ENCODE measurements at regions of chr5 and their contacts with region 1.

Region 1: DNA sequence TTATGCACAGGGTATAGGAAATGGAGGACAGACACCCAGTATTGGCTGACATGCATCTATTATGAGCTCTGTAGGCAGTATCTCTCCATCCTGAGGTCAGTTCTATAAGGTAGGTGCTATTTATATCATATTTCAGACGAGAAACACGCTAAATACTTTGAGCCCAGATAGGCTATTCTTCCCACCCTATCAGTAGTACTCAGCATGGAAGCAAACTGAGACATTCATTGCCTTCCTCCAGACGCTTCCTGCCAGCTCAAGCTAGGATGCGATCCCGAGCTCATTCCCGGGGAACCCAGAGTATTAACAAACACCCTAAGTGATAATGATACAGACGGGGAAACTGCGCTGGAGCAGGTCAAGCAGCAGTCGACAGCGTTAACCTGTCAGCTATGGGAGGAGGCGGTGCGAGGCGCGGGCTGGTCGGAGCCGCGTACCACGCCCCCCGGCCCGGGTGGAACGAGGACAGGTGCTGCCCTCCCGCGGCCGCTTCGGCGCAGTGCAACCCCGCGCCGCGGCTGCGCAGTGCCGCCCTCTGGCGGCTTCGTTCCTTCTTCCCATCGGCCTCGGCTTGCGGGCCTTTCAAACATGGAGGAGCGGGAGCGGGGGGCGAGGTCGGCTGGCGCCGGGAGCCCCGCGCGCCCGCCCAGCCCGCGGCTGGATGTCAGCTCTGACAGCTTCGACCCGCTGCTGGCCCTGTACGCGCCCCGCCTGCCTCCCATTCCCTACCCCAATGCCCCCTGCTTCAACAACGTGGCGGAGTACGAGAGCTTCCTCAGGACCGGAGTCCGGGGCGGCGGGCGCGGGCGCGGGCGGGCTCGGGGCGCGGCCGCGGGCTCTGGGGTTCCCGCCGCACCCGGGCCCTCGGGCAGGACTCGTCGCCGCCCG is at the start of gene LSM11:
- DNase-seq: peak; percentile 88
- H3K4me3 Mint-ChIP-seq: peak within 1 kb of the TSS; percentile 86
- H3K27ac Mint-ChIP-seq: peak within 1 kb of the TSS; percentile 86
- H3K4me1 Mint-ChIP-seq: peaks cover 33% of the 10 kb centered on the region
- H3K27me3 Mint-ChIP-seq: no peaks in the 10 kb centered on the region
- total RNA-seq, gene LSM11: 4.8 to 5.3 TPM

Region 2: DNA sequence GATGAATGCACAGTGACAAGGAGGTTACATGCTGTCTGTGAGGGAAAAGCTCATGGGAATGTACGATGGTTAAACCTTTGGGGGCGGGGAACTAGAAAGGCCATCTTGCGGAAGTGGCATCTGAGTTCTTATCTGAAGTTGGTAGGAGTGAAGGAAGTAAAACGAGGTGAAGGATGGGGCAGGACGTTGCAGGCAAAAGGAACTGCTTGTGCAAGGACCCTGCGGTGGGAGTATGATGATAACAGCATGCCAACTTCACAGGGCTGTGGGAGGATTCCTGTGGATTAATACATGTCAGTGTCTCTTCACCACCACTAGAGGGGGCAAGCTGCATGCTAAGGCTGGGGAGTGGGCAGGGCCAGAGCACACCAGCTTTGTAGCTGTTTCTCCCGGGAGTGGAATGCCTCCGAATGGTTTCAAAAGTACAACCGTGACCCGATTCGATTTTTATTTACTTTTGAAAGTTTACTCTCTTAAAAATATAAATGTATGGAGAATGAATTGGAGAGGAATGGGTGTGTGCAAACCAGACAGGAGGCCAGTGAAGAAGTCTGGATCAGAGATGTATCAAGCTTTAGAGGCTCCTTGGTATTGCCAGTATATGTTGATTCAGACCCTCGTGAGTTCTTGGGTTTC is 415.0 kb before region 1 on chr5:
- CTCF ChIA-PET with region 1: interaction called, 26 read pairs
- POLR2A ChIA-PET with region 1: no interaction called
- DNase-seq: peak; percentile 68
- H3K4me3 Mint-ChIP-seq: no peak overlapping the region
- H3K27ac Mint-ChIP-seq: peak overlapping the region; percentile 82
- H3K4me1 Mint-ChIP-seq: peaks cover 34% of the 10 kb centered on the region
- H3K27me3 Mint-ChIP-seq: no peaks in the 10 kb centered on the region

Region 3: DNA sequence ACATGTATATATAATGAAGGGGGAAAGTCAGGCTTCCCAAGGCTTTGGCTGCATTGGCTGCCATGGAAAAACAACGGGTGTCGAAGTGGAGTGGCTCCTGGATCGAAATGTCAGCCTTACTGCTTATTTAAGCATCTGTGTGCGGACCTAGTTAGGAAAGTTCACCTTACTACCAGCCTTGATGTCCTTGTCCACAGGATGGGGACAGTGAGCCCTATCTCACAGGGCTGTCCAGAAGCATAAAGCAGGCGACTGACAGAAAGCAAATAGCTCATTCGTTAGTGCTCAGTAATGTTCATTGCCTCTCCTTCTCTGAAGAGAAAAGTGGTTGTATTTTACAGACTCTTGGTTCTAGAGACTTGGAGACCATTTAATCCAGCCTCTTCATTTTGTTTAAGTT is 364.9 kb before region 1 on chr5:
- CTCF ChIA-PET with region 1: no interaction called
- POLR2A ChIA-PET with region 1: no interaction called
- DNase-seq: no peak
- H3K4me3 Mint-ChIP-seq: no peak overlapping the region
- H3K27ac Mint-ChIP-seq: no peak overlapping the region
- H3K4me1 Mint-ChIP-seq: peaks cover 6% of the 10 kb centered on the region
- H3K27me3 Mint-ChIP-seq: no peaks in the 10 kb centered on the region

Region 4: GRCh38 chr5:157390551-157391297 is 352.7 kb before region 1 on chr5:
- CTCF ChIA-PET with region 1: interaction called, 11 read pairs
- POLR2A ChIA-PET with region 1: no interaction called
- DNase-seq: peak; percentile 35
- H3K4me3 Mint-ChIP-seq: no peak overlapping the region
- H3K27ac Mint-ChIP-seq: peak overlapping the region; percentile 82
- H3K4me1 Mint-ChIP-seq: peaks cover 18% of the 10 kb centered on the region
- H3K27me3 Mint-ChIP-seq: no peaks in the 10 kb centered on the region

Region 5: GRCh38 chr5:157464519-157465171 is 278.8 kb before region 1 on chr5:
- CTCF ChIA-PET with region 1: interaction called, 10 read pairs
- POLR2A ChIA-PET with region 1: no interaction called
- DNase-seq: peak; percentile 51
- H3K4me3 Mint-ChIP-seq: no peak overlapping the region
- H3K27ac Mint-ChIP-seq: no peak overlapping the region
- H3K4me1 Mint-ChIP-seq: peaks cover 33% of the 10 kb centered on the region
- H3K27me3 Mint-ChIP-seq: peaks cover 19% of the 10 kb centered on the region

Region 6: GRCh38 chr5:157721159-157721558 is 22.2 kb before region 1 on chr5:
- CTCF ChIA-PET with region 1: interaction called, 18 read pairs
- POLR2A ChIA-PET with region 1: no interaction called
- DNase-seq: no peak
- H3K4me3 Mint-ChIP-seq: no peak overlapping the region
- H3K27ac Mint-ChIP-seq: no peak overlapping the region
- H3K4me1 Mint-ChIP-seq: peaks cover 30% of the 10 kb centered on the region
- H3K27me3 Mint-ChIP-seq: no peaks in the 10 kb centered on the region

Region 7: DNA sequence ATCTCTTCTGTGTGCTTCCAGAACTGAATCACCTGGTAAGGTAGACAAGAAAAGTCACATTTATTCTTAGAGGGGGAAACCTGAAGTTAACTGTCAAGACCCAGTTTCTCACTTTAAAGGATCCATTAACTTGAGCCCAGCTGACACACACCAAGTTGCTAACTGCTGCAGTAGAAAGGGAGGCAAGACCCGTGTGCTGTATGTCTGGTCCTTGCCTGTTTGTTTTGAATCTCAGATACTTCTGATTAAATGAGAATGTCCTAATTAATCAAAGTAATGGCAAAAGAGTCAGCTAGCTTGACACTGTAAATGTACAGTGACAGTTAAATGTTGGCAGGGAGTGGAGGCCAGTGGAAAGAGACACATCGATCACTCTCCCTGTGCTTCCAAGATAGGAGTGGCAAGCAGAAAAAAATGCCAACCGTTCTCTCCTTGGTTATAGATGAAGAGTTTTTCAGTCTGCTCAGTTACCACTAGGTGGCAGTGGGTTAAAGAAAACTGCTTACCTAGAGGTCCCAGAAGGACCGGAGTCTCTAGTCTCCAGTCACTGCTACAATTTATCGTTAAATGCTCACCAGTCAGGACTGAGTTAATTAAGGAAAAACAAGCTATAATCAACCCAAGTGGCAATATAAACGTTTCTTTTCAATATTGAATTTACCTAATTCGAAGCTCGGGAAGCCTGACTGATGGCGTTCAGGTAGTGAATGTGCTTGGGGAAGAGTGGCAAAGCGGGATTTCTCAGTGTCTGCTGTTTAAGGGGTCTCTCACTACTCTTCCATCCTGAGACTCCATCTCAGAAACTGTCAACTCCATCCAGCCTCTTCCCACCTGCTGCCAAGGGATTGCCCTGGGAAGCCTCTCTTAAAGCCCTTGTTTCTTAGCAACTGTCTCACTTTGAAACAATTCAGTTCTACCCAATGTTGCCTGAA is 18.5 kb after region 1 on chr5:
- CTCF ChIA-PET with region 1: interaction called, 16 read pairs
- POLR2A ChIA-PET with region 1: no interaction called
- DNase-seq: peak; percentile 51
- H3K4me3 Mint-ChIP-seq: no peak overlapping the region
- H3K27ac Mint-ChIP-seq: no peak overlapping the region
- H3K4me1 Mint-ChIP-seq: peaks cover 8% of the 10 kb centered on the region
- H3K27me3 Mint-ChIP-seq: no peaks in the 10 kb centered on the region

Region 8: DNA sequence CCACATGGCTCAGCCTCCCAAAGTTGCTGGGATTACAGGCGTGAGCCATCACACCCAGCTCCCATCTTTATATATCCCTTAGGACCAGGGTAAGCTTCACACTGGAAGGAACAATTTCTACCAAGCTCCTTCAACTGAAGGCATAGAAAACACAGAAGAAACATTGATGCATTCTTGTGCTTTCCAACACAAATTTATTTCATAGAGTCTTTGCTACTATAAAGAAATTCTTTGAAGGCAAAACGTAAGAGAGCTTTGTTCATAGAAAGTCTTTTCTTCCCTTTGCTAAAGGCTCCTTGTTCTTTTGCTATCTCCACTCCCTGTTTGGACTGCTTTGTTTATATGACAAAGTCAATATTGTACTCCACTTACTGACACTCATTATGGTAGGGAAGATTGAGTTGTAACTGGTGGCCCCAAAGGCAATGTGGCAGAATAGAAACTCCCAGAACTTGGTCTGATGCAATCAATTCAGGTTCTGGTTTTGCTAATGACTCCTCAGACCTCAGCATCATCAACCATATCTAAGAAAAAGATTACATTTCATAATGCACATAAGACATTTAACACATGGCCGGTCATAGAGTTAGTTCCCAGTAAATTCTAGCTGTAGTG is 213.0 kb after region 1 on chr5:
- CTCF ChIA-PET with region 1: no interaction called
- POLR2A ChIA-PET with region 1: no interaction called
- DNase-seq: no peak
- H3K4me3 Mint-ChIP-seq: no peak overlapping the region
- H3K27ac Mint-ChIP-seq: no peak overlapping the region
- H3K4me1 Mint-ChIP-seq: no peaks in the 10 kb centered on the region
- H3K27me3 Mint-ChIP-seq: peaks cover 23% of the 10 kb centered on the region